A673 (cell line): ENCODE measurements at regions of chr11 and their contacts with region 1.

Region 1: GRCh38 chr11:123478352-123478987 is 48.4 kb downstream of the GRAMD1B start:
- DNase-seq: peak; percentile 93
- H3K4me3 ChIP-seq: no peak overlapping the region
- H3K27ac ChIP-seq: no peak overlapping the region
- H3K4me1 ChIP-seq: peaks cover 28% of the 10 kb centered on the region
- H3K27me3 ChIP-seq: no peaks in the 10 kb centered on the region
- CTCF ChIP-seq: peak; percentile 85

Region 2: GRCh38 chr11:122863704-122864326 is 614.7 kb before region 1 on chr11:
- CTCF ChIA-PET with region 1: interaction called, 4 read pairs
- POLR2A ChIA-PET with region 1: no interaction called
- intact Hi-C with region 1: loop called (anchors 10 kb)
- DNase-seq: peak; percentile 71
- H3K4me3 ChIP-seq: no peak overlapping the region
- H3K27ac ChIP-seq: no peak overlapping the region
- H3K4me1 ChIP-seq: no peaks in the 10 kb centered on the region
- H3K27me3 ChIP-seq: no peaks in the 10 kb centered on the region
- CTCF ChIP-seq: peak; percentile 99

Region 3: GRCh38 chr11:123033895-123034294 is 444.6 kb before region 1 on chr11:
- CTCF ChIA-PET with region 1: no interaction called
- POLR2A ChIA-PET with region 1: no interaction called
- intact Hi-C with region 1: loop called (anchors 5 kb)
- DNase-seq: peak; percentile 71
- H3K4me3 ChIP-seq: no peak overlapping the region
- H3K27ac ChIP-seq: no peak overlapping the region
- H3K4me1 ChIP-seq: no peaks in the 10 kb centered on the region
- H3K27me3 ChIP-seq: no peaks in the 10 kb centered on the region
- CTCF ChIP-seq: peak; percentile 57

Region 4: GRCh38 chr11:123246749-123247495 is 231.5 kb before region 1 on chr11:
- CTCF ChIA-PET with region 1: interaction called, 6 read pairs
- POLR2A ChIA-PET with region 1: no interaction called
- intact Hi-C with region 1: loop called (anchors 2 kb)
- DNase-seq: peak; percentile 93
- H3K4me3 ChIP-seq: no peak overlapping the region
- H3K27ac ChIP-seq: no peak overlapping the region
- H3K4me1 ChIP-seq: peaks cover 45% of the 10 kb centered on the region
- H3K27me3 ChIP-seq: no peaks in the 10 kb centered on the region
- CTCF ChIP-seq: peak; percentile 100

Region 5: GRCh38 chr11:123301696-123302400 is 176.6 kb before region 1 on chr11:
- CTCF ChIA-PET with region 1: interaction called, 5 read pairs
- POLR2A ChIA-PET with region 1: interaction called, 3 read pairs
- intact Hi-C with region 1: loop called (anchors 1 kb)
- DNase-seq: peak; percentile 79
- H3K4me3 ChIP-seq: peak overlapping the region; percentile 19
- H3K27ac ChIP-seq: no peak overlapping the region
- H3K4me1 ChIP-seq: peaks cover 55% of the 10 kb centered on the region
- H3K27me3 ChIP-seq: no peaks in the 10 kb centered on the region
- CTCF ChIP-seq: peak; percentile 84

Region 6: DNA sequence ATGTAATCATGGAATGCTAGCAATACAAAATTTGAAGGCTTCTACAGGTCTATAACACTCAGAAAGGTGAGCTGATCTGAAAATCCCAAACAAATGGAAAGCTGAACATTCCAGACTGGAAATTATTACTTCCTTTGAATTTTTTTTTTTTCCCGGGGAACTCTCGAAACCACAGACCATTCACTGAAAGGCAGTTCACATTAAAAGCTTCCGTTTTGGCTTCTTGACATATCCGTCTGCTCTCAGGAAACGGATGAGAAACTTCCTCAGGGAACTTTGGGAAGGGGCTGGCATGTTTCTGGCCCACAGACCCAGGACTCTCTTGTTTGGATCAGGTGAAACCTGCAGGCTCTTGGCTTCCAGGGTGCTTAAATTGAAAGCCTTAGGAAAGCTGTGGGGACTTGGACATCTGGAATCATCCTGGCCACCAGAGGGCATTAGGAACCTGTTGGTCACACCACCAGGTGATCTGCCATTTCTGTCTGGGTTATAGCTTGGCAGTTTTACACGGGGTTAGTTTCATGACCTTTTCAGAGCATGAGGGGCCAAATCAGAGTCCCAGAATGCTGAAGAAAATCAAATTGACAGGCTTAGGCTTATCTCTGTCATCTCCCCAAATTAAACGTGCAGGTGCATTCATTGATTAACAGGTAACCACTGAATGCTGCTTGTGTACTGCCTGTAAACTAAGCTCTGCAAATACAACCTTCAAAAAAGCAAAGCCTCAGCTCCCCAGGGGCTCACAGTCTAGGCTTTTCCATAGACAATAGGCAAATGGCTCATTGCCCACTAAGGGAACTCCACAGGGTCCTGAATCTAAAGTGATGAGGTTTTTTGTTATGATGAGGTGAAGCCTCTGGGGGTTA is 71.1 kb before region 1 on chr11:
- CTCF ChIA-PET with region 1: interaction called, 39 read pairs
- POLR2A ChIA-PET with region 1: interaction called, 3 read pairs
- intact Hi-C with region 1: loop called (anchors 1 kb)
- DNase-seq: peak; percentile 70
- H3K4me3 ChIP-seq: no peak overlapping the region
- H3K27ac ChIP-seq: no peak overlapping the region
- H3K4me1 ChIP-seq: peaks cover 15% of the 10 kb centered on the region
- H3K27me3 ChIP-seq: no peaks in the 10 kb centered on the region
- CTCF ChIP-seq: peak; percentile 79